AG04450 (cell line): ENCODE measurements at regions of chr6 and their contacts with region 1.

Region 1: GRCh38 chr6:134882426-134883038 is 67.4 kb downstream of the ALDH8A1 start:
- DNase-seq: peak; percentile 63
- H3K4me3 ChIP-seq: no peak overlapping the region
- H3K27ac ChIP-seq: no peak overlapping the region
- H3K27me3 ChIP-seq: no peaks in the 10 kb centered on the region
- CTCF ChIP-seq: peak; percentile 99

Region 2: DNA sequence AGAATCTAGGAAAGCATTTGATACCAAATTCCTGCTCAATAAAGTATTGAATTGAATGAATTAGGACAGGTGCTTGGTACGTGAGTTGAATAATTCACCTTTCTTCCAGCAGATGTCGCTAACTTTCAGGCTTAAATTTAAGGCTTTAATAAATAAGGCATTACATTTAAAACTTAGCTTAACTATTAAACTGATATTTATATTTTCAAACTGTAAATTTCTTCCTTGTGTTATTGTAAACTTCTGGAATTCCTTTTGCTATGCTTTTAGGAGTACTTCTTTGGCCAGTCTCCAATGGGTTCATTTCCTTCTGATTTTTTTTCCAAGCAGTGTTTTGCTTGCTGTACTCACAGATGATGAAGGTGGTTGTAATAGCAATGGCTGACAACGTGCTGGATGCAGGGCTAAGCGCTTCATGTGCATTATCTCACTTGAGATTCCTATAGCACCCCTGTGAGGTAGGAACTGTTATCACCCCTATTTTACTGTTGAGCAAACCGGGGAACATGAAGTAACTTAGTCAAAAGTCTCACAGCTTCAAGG is 758.8 kb before region 1 on chr6:
- CTCF ChIA-PET with region 1: interaction called, 55 read pairs
- POLR2A ChIA-PET with region 1: no interaction called
- DNase-seq: peak; percentile 75
- H3K4me3 ChIP-seq: no peak overlapping the region
- H3K27ac ChIP-seq: no peak overlapping the region
- H3K27me3 ChIP-seq: no peaks in the 10 kb centered on the region
- CTCF ChIP-seq: peak; percentile 63

Region 3: DNA sequence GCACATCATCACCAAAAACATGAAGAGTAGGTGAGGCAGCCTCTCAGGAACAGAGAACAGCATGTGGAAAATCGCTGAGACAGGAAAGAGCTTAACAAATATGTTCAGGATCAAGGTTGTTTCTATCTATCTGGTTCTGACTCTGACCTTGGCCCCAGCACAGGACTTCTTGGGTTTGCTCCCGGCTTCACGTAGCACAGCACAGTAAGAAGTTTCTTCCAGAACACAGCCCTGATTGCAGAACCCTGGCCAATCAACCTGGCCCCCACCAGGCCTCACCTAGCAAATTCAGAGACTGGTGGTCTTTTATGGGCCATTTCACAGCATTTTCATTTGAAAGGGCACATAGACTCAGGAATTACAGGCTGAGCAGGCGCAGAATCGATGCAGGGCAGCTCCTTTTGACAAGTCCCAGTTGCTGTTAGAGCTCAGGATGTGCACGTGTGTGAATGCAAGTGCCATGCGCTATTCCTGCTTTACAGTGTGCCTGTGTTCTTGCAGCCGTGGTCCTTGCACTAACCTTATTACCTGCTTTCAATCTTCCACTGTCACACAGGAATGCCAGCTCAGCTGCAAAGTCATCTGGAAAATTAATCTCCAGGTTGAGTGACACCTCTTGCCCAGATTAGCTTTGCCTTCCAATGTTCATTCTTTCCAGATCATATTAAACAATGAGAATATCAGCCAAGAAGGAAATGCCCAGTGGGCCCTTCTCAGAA is 729.6 kb before region 1 on chr6:
- CTCF ChIA-PET with region 1: interaction called, 69 read pairs
- POLR2A ChIA-PET with region 1: no interaction called
- DNase-seq: no peak
- H3K4me3 ChIP-seq: no peak overlapping the region
- H3K27ac ChIP-seq: no peak overlapping the region
- H3K27me3 ChIP-seq: no peaks in the 10 kb centered on the region
- CTCF ChIP-seq: no peak

Region 4: DNA sequence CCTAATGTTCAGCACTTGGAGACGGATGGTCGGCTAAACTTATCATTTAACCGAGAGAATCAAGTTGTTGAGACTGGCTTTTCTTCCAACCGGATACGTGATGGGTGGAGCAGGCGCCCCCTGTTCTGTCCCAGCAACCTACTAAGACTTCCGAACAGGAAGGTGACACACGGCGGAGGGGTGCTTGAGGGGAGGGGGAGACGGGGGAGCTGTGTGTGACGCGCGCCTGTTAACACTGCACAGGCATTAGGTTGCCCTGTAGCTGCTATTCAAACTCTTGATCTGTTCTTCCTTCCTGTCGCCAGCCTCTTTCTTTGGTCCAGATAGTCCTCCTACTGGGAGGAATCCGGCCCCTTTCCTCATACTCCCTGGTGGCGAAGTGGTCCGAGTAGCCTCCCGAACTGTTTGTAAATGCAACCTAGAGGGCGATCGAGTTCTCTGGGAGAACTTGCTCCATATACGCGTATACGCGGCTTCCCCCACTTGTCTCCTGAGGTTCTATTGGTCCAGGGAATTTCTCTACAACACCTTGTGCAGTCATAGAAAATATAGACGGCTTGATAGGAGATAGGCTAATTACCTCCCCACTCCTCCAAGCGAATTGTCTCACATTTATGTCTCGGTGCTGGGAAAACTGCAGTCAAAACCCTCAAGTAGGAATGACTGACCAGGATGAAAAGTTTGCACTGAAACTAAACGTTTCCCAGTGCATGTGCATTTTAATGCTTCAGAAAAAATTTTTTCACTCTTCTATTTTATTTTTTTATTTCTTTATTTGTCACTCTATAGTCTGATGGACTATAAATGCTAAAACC is 704.1 kb before region 1 on chr6:
- CTCF ChIA-PET with region 1: interaction called, 12 read pairs
- POLR2A ChIA-PET with region 1: no interaction called
- DNase-seq: peak; percentile 86
- H3K4me3 ChIP-seq: peak overlapping the region; percentile 55
- H3K27ac ChIP-seq: peak overlapping the region; percentile 79
- H3K27me3 ChIP-seq: no peaks in the 10 kb centered on the region
- CTCF ChIP-seq: peak; percentile 97

Region 5: GRCh38 chr6:134835993-134836392 is 46.5 kb before region 1 on chr6:
- CTCF ChIA-PET with region 1: interaction called, 15 read pairs
- POLR2A ChIA-PET with region 1: no interaction called
- DNase-seq: no peak
- H3K4me3 ChIP-seq: no peak overlapping the region
- H3K27ac ChIP-seq: no peak overlapping the region
- H3K27me3 ChIP-seq: no peaks in the 10 kb centered on the region
- CTCF ChIP-seq: no peak

Region 6: DNA sequence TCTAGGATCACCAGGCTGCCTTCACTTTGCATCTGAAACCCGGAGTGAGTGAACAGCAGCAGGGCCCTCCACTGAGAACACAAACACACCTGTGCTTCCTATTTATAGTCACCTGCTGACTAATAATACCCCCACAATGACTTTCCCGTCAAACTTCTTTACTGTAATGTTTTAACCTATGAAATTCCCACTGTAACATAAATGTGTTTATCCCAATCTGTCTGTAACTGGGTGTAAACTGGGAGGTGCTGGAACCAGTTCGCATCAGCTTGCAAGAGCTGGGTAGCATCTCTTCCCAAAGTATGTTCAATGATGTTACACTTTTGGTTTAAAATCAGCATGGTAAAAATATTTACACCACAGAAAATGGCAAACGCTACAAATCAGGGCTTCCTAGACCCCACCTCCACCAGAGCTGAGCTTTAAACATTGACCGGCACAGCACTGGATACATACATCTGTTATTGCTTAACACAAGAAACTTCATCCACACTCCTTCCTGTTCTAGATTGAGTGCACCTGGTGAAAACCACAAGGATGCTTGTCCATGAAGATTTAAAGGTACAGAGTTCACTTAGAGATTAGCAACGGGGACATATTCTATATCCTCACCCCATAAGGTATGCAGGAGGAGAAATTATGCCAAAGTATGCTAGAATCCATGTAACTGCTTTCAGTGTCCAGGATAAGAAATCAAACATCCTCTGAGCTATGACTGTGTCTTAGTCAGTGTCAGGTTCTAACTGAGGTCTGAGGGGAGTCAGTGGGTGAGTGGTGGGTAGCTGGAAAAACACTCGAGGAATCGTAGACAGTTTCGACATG is 11.6 kb before region 1 on chr6:
- CTCF ChIA-PET with region 1: interaction called, 10 read pairs
- POLR2A ChIA-PET with region 1: no interaction called
- DNase-seq: peak; percentile 65
- H3K4me3 ChIP-seq: no peak overlapping the region
- H3K27ac ChIP-seq: no peak overlapping the region
- H3K27me3 ChIP-seq: no peaks in the 10 kb centered on the region
- CTCF ChIP-seq: no peak

Region 7: DNA sequence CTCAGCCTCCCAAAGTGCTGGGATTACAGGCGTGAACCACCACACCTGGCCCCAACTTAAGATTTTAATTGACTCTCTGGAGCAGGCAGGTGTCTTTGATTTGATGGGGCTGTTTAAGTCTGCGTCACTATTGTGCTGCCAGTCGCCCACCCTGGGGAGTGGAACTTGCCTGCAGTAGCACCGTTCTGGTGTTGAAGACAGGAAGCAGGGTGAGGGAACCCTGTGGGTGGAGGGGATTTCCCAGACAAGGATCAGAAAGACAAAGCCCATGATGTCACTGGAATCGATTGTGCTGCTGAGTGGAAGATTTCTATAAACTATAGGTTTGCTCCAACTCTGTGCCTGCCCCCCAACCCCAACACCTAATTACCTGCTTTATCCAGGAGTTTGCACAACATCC is 56.4 kb after region 1 on chr6:
- CTCF ChIA-PET with region 1: interaction called, 30 read pairs
- POLR2A ChIA-PET with region 1: no interaction called
- DNase-seq: no peak
- H3K4me3 ChIP-seq: no peak overlapping the region
- H3K27ac ChIP-seq: no peak overlapping the region
- H3K27me3 ChIP-seq: no peaks in the 10 kb centered on the region
- CTCF ChIP-seq: no peak

Region 8: DNA sequence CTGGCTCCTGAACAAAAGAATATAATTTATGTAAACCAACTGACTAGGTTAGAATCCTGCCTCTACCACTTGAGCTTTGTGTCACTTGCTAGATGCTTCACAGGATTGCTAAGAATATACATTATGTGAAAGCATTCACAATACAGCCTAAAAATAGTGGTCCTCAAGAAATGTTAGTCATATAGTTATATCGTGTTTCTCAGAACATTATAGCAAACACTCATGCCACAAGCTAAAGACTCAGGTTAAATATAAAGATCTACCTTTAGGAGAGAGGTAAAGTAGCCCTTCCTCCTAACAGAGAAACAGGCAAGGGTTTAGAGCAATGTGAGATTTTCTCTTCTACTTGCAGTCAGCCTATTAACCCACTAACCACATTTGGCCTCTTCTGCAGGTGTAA is 85.2 kb after region 1 on chr6:
- CTCF ChIA-PET with region 1: no interaction called
- POLR2A ChIA-PET with region 1: no interaction called
- DNase-seq: no peak
- H3K4me3 ChIP-seq: no peak overlapping the region
- H3K27ac ChIP-seq: no peak overlapping the region
- H3K27me3 ChIP-seq: no peaks in the 10 kb centered on the region
- CTCF ChIP-seq: no peak